Right cardiac atrium (tissue), 5 donors: ENCODE measurements at regions of chr9 and their contacts with region 1.

Region 1: GRCh38 chr9:19184144-19184917 is 46.2 kb upstream of the DENND4C start:
- DNase-seq: peak; percentile 80 to 87 (median 81)
- ATAC-seq: peak; percentile 83 to 92
- H3K4me3 ChIP-seq: no peak overlapping the region
- H3K27ac ChIP-seq: peak overlapping the region; percentile 85
- H3K4me1 ChIP-seq: peaks cover 8% of the 10 kb centered on the region
- H3K27me3 ChIP-seq: no peaks in the 10 kb centered on the region

Region 2: GRCh38 chr9:19230356-19231125 is 46.2 kb after region 1 on chr9 and contains the start of gene DENND4C:
- intact Hi-C with region 1: loop called in 1 of 4 experiments (anchors 5 kb)
- DNase-seq: peak; percentile 90 to 96 (median 96)
- ATAC-seq: peak; percentile 95
- H3K4me3 ChIP-seq: peak within 1 kb of the TSS; percentile 86
- H3K27ac ChIP-seq: peak within 1 kb of the TSS; percentile 95
- H3K4me1 ChIP-seq: no peaks in the 10 kb centered on the region
- H3K27me3 ChIP-seq: no peaks in the 10 kb centered on the region
- total RNA-seq, gene DENND4C: 41.9 to 61.5 (median 44.3) TPM

Region 3: DNA sequence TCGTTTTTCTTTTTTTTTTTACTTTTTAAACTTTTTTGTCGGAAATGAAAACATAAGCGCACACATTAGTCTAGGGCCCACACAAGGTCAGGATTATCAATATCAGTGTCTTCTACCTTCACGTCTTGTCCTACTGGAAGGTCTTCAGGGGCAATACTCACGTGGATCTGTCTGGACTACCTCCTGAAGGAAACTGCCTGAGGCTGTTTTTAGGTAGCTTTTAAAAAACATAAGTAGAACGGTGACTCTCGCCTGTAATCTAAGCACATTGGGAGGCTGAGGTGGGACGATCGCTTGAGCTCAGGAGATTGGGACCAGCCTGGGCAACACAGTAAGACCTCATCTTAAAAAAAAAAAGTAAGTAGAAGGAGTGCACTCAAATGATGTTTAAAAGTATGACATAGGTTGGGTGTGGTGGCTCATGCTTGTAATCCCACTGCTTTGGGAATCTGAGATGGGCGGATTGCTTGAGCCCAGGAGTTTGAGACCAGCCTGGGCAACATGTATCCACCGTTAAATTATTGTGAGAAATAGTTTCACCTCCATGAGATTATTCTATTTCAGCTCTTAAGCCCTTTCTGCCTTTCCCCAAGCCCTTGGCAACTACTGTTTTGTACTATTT is 57.3 kb after region 1 on chr9:
- intact Hi-C with region 1: no loop called
- DNase-seq: no peak
- ATAC-seq: no peak
- H3K4me3 ChIP-seq: no peak overlapping the region
- H3K27ac ChIP-seq: no peak overlapping the region
- H3K4me1 ChIP-seq: peaks cover 3% of the 10 kb centered on the region
- H3K27me3 ChIP-seq: no peaks in the 10 kb centered on the region

Region 4: DNA sequence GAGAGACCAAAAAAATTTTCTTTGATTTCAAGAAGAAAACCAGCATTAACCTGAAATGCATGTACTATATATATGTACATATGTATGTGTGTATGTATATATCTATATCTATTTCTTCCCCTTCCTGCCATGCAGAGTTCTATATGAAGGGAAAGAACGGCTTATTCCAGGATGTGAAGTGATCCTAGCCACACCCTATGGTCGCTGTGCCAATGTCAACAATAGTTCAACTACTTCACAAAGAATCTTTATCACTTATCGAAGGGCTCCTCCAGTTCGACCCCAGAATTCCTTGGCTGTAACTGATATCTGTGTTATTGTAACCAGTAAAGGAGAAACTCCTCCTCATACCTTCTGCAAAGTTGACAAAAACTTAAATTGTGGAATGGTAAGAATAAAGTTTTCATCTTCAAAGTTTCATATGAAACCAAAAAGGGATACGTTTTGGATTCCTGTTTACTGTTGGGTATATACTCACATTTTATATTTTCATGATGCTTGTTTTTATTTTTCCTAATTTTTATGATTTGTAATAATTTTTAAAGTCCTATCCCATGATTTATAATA is 102.4 kb after region 1 on chr9:
- intact Hi-C with region 1: no loop called
- DNase-seq: peak in 1 of 3 donors; percentile 32
- ATAC-seq: peak; percentile 61 to 81
- H3K4me3 ChIP-seq: no peak overlapping the region
- H3K27ac ChIP-seq: no peak overlapping the region
- H3K4me1 ChIP-seq: peaks cover 5% of the 10 kb centered on the region
- H3K27me3 ChIP-seq: no peaks in the 10 kb centered on the region

Region 5: DNA sequence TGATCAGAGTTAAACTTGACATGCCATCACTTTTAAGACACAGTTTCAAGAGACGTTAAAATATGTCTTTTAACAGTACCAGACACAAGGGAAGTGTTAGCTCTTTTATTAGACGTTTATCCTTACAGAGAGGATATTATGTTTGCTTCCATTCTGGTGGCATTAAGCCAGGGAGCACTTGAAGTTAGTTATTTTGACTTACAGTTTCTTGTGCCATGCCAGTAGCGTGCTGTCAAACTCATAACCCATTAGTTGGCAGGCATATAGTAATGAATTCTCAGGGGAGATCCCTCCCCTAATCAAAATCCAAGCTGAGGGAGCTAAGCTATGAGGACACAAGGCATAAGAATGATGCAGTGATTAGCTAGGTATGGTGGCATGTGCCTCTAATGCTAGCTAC is 129.2 kb after region 1 on chr9:
- intact Hi-C with region 1: loop called in 1 of 4 experiments (anchors 10 kb)
- DNase-seq: no peak
- ATAC-seq: peak; percentile 28 to 33
- H3K4me3 ChIP-seq: no peak overlapping the region
- H3K27ac ChIP-seq: no peak overlapping the region
- H3K4me1 ChIP-seq: peaks cover 4% of the 10 kb centered on the region
- H3K27me3 ChIP-seq: no peaks in the 10 kb centered on the region

Region 6: DNA sequence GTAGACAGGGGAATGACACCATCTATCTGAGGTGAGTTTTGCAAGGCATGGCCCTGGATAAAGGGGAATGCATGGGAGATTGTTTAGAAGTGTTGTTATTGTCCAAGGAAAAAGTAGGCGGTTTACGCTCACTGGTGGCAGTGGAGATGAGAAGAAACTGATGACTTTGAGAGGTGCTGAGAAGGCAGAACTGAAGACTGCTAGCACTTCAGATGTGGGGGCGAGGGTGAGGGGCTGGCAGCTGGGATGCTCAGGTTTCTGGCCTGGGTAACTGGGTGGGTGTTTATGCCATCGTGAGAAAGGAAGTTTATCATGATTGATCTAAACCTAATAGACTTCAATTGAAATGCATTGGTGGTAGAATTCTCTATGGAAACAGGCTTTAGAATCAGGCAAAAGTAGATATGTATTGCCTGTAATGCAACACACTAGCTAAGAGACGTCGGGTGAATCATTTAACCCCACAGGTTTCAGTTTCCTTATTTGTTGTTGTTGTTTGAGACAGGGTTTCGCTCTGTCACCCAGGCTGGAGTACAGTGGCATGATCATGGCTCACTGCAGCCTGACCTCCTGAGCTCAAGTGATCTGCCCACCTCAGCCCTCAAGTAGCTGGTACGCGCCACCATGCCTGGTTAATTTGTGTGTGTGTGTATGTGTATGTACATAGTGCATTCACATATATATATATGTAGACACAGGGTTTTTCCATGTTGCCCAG is 481.0 kb after region 1 on chr9:
- intact Hi-C with region 1: no loop called
- DNase-seq: peak in 1 of 3 donors; percentile 7
- ATAC-seq: no peak
- H3K4me3 ChIP-seq: no peak overlapping the region
- H3K27ac ChIP-seq: no peak overlapping the region
- H3K4me1 ChIP-seq: no peaks in the 10 kb centered on the region
- H3K27me3 ChIP-seq: no peaks in the 10 kb centered on the region